ENCODE measurements at regions of chr1 and their contacts with region 1.

Region 1: GRCh38 chr1:151539990-151540981 is at the start of gene TUFT1:
- DNase-seq: peak; percentile 94 to 95
- H3K4me3 ChIP-seq: peak within 1 kb of the TSS; percentile 13 to 97 (median 67)
- H3K27ac ChIP-seq: peak within 1 kb of the TSS; percentile 91 to 97 (median 93)
- H3K4me1 ChIP-seq: peaks cover 8 to 19% of the 10 kb centered on the region in 2 donors
- H3K27me3 ChIP-seq: no peaks in the 10 kb centered on the region
- CTCF ChIP-seq: no peak
- POLR2A ChIP-seq: peak; percentile 81 to 99
- total RNA-seq, gene TUFT1: 4.0 to 8.8 (median 5.0) TPM

Region 2: DNA sequence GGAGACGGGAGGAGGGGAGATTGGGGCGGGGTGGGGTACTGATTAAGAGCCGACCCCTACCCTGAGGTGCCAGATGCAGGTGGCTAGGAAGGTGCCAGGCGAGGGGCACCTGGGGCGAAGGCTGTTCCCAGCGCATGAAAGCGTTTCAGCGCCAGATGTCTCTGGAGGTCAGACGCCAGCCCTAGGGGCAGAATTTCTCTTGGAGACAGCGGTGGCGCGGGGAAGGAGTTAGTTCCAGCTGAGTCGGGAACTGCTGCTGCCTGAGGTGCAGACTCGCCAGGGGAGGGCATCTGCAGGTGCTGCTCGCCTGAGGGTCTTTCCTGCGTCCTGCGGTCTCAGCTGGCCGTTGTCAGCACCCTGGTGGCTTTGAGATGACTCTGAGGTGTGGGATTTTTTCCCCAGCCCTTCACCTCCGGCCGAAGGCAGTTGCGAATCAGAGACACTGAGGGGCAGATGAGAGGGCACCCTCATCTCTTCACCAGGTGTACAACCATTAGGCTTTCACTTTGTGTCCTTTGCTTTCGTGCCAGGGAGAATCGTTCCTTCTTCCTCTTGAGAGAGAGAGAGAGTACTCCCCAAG is 28.6 kb before region 1 on chr1:
- intact Hi-C with region 1: loop called (anchors 2 kb)
- DNase-seq: peak; percentile 68 to 72
- H3K4me3 ChIP-seq: peak overlapping the region in 2 of 3 donors; percentile 52 to 65
- H3K27ac ChIP-seq: peak overlapping the region; percentile 48 to 85 (median 77)
- H3K4me1 ChIP-seq: peaks cover 35 to 41% of the 10 kb centered on the region in 2 donors
- H3K27me3 ChIP-seq: no peaks in the 10 kb centered on the region
- CTCF ChIP-seq: peak in 2 of 6 experiments; percentile 9 to 24
- POLR2A ChIP-seq: no peak

Region 3: DNA sequence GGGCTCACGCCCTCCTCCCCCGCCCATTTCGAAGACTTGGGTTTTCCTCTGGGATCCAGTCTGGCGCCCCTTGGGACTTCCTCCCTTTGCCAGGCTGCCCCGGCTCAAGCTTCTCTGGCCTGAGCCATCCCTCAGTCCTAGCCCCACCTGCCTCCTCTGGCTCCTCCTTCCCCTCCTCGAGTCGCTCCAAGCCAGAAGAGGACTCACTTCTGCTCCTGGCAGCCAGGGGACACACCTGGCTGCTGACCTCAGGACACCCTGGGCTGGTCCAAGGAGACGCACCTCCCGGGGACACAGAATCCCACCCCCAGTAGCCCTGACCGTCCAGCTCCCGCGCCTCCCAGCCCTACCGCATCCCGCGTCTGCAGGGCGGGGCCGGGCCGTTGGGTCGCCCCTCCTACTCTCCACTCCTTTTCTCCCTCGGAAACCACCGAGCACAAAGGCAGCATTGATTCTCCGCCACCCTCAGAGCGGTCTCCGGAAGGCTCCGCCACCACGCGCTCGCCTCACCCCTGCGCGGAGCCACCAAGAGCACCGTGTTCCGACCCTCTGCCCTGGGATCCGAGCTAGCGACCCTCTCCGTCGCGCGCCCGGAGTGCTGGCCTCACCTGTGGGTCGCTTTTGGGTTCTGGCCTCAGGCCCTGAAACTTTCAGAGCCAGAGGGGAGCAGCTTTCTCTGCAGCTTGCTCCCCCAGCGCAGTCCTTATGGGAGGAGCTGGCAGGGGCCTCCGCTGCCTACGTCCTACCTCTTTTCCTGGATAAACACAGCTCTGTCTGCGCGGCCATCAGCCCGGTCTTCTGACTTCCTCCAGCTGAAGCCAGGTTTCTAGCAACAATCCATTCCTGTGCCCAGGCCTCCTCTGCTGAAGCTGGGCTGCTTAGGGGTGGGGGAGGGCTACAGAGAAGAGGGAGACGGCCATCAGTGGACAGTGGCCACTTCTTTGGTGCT is 299.4 kb after region 1 on chr1 and contains the start of gene C2CD4D:
- intact Hi-C with region 1: loop called (anchors 10 kb)
- DNase-seq: peak; percentile 81 to 82
- H3K4me3 ChIP-seq: peak within 1 kb of the TSS; percentile 7 to 32 (median 27)
- H3K27ac ChIP-seq: peak within 1 kb of the TSS; percentile 79 to 95 (median 89)
- H3K4me1 ChIP-seq: peaks cover 23 to 47% of the 10 kb centered on the region in 2 donors
- H3K27me3 ChIP-seq: no peaks in the 10 kb centered on the region
- CTCF ChIP-seq: peak in 3 of 6 experiments; percentile 19 to 48 (median 27)
- POLR2A ChIP-seq: peak in 1 of 2 donors; percentile 82
- total RNA-seq, gene C2CD4D: 0.29 to 1.3 (median 0.33) TPM in 3 of 4 donors, not detected in the other

Measured in thyroid gland (tissue), 4 donors.